ENCODE measurements at regions of chr3 and their contacts with region 1.

Region 1: DNA sequence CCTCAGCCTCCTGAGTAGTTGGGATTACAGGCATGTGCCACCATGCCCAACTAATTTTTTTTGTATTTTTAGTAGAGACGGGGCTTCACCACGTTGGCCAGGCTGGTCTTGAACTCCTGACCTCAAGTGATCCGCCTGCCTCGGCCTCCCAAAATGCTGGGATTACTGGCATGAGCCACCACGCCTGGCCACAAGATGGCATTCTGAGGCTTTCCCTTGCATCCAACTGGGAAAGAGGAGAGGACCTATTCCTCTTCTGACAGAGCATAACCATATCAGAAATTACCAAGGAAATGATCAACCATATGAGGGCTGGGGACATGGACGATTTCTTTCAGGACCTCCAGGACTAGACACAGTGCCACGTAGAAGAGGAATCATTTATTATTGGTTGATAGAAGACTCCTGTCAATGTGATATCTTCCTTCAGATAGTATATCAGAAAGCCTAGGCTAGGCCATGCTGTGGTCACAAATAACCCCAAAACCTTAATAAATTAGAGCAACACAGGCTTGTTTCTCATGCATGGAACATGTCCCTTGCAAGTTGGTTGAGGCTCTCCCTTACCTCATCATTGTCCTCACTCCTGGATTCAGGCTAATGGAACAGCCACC is 372.3 kb upstream of the IL12A start:
- DNase-seq: peak; percentile 53 to 83
- ATAC-seq: peak; percentile 64
- H3K4me3 ChIP-seq: no peak overlapping the region
- H3K27ac ChIP-seq: no peak overlapping the region
- H3K4me1 ChIP-seq: peaks cover 0 to 1% of the 10 kb centered on the region in 2 donors
- H3K27me3 ChIP-seq: no peaks in the 10 kb centered on the region

Region 2: DNA sequence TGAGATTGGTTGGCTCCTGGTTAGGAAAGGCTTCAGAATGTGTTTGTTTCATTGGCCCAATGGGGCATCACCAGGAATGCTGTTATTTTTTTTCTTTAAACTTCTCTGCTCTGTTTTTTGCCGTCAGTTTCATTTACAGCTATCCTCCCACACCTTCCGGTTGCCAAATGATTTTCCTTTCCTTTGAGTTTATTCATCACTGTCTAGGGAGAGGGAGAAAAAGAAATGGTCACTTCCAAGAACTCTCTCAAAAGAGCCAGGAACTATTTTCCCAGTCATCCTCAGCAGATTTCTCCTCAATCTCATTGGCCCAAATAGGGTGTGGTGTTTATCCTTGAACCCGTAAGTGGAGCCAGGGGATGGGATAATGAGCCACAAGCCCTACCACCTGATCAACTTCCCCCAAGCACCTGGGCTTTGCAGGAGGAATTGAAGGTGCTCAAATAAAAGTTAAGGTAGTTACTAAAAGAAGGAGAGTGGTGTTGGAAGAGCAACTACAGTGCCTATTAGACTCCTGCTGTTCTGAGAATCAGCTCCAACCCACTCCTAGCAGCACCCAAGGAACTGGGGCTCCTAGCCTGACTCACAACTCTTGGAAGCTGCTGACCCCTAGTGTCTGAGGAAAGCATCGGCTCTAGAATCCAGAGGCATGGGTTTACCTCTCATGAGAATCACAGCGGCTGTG is 188.5 kb after region 1 on chr3:
- intact Hi-C with region 1: loop called (anchors 1 to 5 kb)
- DNase-seq: peak in 1 of 2 donors; percentile 81
- ATAC-seq: peak; percentile 94
- H3K4me3 ChIP-seq: no peak overlapping the region
- H3K27ac ChIP-seq: peak overlapping the region; percentile 36 to 67
- H3K4me1 ChIP-seq: peaks cover 5 to 20% of the 10 kb centered on the region in 2 donors
- H3K27me3 ChIP-seq: no peaks in the 10 kb centered on the region

Region 3: GRCh38 chr3:160554980-160555379 is 938.7 kb after region 1 on chr3:
- intact Hi-C with region 1: no loop called
- DNase-seq: no peak
- ATAC-seq: no peak
- H3K4me3 ChIP-seq: no peak overlapping the region
- H3K27ac ChIP-seq: no peak overlapping the region
- H3K4me1 ChIP-seq: peaks cover 0 to 3% of the 10 kb centered on the region in 2 donors
- H3K27me3 ChIP-seq: no peaks in the 10 kb centered on the region

Measured in aorta (tissue), 5 donors.